AG04449 (cell line): ENCODE measurements at regions of chr4 and their contacts with region 1.

Region 1: DNA sequence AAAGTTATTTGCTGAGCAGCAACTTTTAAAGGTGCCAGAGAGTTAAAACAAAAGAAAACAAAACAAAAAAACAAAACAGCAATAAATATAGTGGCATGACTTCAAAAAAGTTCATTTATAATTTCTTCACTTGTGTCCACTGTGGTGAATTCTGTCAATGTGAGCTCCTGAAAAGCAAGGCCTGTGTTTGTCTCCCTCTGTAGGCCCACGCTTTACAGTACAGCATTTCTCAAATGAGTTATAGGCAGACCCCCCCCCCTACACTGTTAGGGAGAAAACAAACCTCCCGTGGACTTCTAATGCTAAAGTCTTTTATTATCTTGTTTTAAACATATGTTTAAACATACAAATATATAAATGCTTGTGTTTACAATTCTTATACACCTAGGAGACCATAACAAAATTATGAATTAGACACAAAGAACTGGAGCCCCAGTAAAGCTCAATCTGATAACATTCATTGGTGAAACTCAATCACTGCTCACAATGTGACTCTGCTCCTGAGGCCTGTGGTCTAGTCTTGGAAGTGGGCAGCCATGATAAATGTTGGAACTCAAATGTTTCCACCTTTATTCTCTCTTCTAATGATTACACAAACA is 47.0 kb upstream of the SCOC start:
- DNase-seq: no peak
- H3K4me3 ChIP-seq: no peak overlapping the region
- CTCF ChIP-seq: peak; percentile 68

Region 2: DNA sequence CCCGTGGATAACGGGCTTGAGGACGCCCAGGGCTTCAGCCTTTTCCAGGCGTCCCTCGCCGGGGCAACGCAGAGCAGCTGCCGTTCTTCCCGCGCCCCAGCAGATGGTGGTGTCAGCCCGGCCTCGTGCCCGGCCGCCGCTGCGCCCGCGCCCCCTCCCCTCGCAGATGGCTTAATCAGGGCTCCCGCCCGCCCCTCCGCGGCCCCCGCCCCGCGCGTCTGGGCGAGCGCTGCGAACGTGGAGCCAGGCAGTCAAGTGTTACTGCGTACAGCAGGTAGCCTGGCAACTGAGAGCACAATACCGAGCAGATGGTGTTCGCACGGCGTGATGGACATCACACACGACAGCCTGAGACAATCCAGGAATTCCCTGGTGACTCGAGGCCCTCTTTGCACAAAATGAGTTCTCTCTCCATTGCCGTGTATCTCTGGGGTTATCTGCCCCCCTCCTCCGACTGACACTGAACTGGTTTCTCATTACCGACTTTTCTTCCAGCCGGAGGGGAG is 591.6 kb before region 1 on chr4:
- CTCF ChIA-PET with region 1: interaction called, 12 read pairs
- POLR2A ChIA-PET with region 1: no interaction called
- DNase-seq: peak; percentile 14
- H3K4me3 ChIP-seq: peak overlapping the region; percentile 59
- CTCF ChIP-seq: peak; percentile 86

Region 3: GRCh38 chr4:140312100-140312499 is 14.4 kb before region 1 on chr4:
- CTCF ChIA-PET with region 1: interaction called, 40 read pairs
- POLR2A ChIA-PET with region 1: no interaction called
- DNase-seq: no peak
- H3K4me3 ChIP-seq: no peak overlapping the region
- CTCF ChIP-seq: no peak

Region 4: DNA sequence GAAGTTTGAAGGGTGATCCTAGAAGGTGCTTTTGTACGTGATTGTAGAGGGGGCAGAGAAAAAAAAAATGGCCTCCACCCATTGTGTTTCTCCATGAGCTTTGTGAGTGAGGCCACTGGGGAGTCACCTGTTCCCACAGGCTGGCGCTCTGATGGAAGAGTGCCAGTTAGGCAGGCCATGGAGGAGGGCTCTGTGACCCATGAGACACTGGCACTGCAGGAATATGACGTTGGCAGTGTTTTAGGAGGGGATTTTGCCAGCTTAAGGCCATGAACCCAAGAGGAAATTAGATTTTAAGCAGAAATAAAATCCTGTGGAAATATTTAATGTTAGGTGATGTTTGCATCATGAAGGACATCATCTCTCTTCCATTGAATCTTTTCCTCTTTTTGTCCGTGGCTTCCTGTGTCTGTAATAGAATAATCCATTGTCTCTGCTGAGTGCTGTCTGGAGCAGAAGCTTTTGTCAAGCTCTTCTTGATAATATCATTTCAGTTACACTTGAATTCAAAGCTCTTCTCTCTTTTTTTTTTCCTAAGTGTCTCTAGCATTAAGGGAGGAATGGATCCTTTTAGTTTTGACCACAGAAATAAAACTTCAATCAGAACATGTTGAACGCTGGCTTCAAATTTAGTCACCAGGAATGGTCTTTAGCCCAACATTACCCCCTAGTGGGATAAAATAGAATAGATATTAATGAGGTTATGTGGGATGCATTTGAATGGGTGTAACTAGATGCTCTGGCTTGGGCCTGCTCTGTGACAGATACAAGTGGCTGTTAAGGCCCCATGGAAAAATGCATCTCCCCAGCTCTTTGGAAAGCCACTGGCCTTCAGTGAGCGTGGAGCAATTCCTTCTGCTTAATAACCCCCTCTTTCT is 283.3 kb after region 1 on chr4:
- CTCF ChIA-PET with region 1: interaction called, 30 read pairs
- POLR2A ChIA-PET with region 1: no interaction called
- DNase-seq: no peak
- H3K4me3 ChIP-seq: no peak overlapping the region
- CTCF ChIP-seq: peak; percentile 33